GM12878 (cell line): ENCODE measurements at regions of chr2 and their contacts with region 1.

Region 1: DNA sequence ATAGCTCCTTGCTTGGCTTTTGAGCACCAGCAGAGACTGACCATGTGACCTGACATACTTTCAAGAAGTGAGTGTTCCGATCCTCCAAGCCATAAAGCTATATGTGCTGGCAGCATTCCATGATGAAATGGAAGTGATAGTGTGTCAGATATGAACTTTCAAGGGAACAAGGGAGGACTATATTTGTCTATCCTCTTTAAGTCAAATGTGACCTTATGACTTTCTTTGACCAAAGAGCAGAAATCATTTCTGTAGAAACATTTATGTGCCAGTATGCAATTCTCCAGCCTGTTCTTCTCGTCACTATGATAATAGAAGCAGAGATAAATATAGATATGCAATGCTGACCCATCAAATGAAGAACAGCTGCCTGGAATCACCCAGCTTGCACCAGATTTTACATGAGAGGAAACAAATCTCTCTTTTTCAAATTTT is 14.4 kb downstream of the HYCC2 start:
- DNase-seq: no peak
- ATAC-seq: no peak
- H3K4me3 ChIP-seq: no peak overlapping the region
- H3K27ac ChIP-seq: no peak overlapping the region
- H3K4me1 ChIP-seq: no peaks in the 10 kb centered on the region
- H3K27me3 ChIP-seq: no peaks in the 10 kb centered on the region
- CTCF ChIP-seq: no peak
- EP300 ChIP-seq: no peak
- POLR2A ChIP-seq: no peak
- RAD21 ChIP-seq: no peak

Region 2: GRCh38 chr2:201007561-201007998 is 49.5 kb before region 1 on chr2:
- CTCF ChIA-PET with region 1: no interaction called
- POLR2A ChIA-PET with region 1: no interaction called
- RAD21 ChIA-PET with region 1: no interaction called
- SMC1A ChIA-PET with region 1: no interaction called
- in situ Hi-C with region 1: no loop called
- intact Hi-C with region 1: no loop called
- DNase-seq: no peak
- ATAC-seq: no peak
- H3K4me3 ChIP-seq: no peak overlapping the region
- H3K27ac ChIP-seq: no peak overlapping the region
- H3K4me1 ChIP-seq: no peaks in the 10 kb centered on the region
- H3K27me3 ChIP-seq: no peaks in the 10 kb centered on the region
- CTCF ChIP-seq: no peak
- EP300 ChIP-seq: no peak
- POLR2A ChIP-seq: no peak
- RAD21 ChIP-seq: no peak

Region 3: DNA sequence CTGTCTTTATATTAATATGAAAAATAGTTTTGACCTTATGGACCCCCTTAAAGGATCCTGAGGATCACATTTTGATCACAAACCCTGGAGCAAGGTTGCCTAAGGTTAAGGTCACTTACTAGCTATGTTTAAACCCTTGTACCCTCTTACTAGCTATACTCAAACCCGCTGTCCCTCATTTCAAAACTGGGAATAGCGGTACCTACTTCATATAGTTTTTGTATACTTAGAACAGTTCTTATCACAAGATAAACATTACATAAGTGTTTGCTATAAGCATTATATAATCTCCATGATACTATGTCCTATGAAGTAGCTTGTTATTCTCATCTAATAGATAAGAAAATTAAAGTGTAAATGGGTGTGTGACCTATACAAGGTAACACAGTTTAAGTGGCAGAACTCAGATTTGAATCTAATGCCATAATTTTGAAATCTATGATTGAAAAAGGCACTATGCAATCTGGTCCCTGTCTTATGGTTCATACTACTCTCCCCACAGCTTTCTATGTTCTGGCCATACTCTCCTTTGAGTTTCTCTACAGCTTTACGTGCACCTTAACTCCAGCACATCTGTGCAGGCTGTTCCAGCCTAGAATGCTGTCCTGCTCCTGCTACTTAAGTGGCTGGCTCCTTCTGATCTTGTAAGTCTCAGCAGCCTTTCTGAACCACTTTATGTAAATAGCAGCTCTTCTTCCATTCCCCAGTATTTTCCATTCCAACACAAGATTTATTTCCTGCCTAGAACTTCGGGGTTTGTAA is 16.1 kb before region 1 on chr2:
- CTCF ChIA-PET with region 1: interaction called, 5 read pairs
- POLR2A ChIA-PET with region 1: no interaction called
- RAD21 ChIA-PET with region 1: no interaction called
- SMC1A ChIA-PET with region 1: interaction called, 10 read pairs
- in situ Hi-C with region 1: no loop called
- intact Hi-C with region 1: no loop called
- DNase-seq: no peak
- ATAC-seq: no peak
- H3K4me3 ChIP-seq: no peak overlapping the region
- H3K27ac ChIP-seq: no peak overlapping the region
- H3K4me1 ChIP-seq: no peaks in the 10 kb centered on the region
- H3K27me3 ChIP-seq: no peaks in the 10 kb centered on the region
- CTCF ChIP-seq: no peak
- EP300 ChIP-seq: no peak
- POLR2A ChIP-seq: no peak
- RAD21 ChIP-seq: no peak